CD4-positive, alpha-beta memory T cell (primary cell): ENCODE measurements at regions of chr7 and their contacts with region 1.

Region 1: GRCh38 chr7:157875230-157876179 is 538.7 kb downstream of the DNAJB6 start:
- DNase-seq: peak; percentile 53 to 66 (median 60)
- H3K4me3 ChIP-seq: peak overlapping the region; percentile 39 to 42
- H3K4me3 Mint-ChIP-seq: peak overlapping the region; percentile 58 to 90 (median 79)
- H3K27ac ChIP-seq: no peak overlapping the region
- H3K27ac Mint-ChIP-seq: peak overlapping the region; percentile 4 to 91 (median 53)
- H3K4me1 ChIP-seq: peaks cover 22% of the 10 kb centered on the region
- H3K4me1 Mint-ChIP-seq: peaks cover 13 to 24% (median 19%) of the 10 kb centered on the region in 4 donors
- H3K27me3 ChIP-seq: no peaks in the 10 kb centered on the region
- H3K27me3 Mint-ChIP-seq: peaks cover 0 to 2% of the 10 kb centered on the region in 2 donors

Region 2: DNA sequence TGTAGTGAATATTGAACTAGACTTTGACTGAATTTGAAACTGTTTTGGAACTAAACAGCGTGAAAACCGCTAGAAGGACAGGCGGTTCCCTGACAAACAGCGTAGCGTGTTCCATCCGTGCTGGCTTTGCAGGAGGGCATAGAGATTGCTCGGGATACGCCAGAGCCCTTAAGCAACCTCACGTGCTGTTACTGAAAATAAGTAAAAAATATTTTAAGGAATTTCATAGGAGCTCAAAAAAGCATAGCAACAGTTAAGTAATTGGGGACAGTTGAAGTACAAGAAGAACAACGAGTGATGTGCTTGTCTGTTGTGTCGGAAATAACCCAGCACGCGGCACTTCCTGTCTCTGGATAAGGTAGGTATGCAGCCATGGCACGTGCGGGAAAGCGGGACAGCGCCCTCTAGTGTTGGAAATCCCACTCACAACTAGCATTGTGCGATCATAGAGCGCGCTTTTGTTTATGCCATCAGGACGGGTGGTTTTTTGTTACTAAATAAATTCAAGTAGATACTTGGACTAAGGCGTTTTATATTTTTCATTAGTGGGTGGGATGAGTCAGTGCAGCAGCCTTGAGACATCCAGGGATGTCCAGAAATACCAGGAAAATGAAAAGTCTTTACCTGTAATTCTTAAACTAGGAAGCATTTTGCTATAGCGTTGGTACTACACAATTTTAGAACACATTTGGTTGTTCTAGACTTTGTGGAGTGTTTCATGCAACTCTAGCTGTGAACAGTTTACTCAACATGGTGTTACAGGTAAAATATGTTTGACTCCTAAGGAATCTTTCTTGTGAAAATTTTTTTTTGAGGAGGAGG is 488.3 kb before region 1 on chr7:
- CTCF ChIA-PET with region 1: no interaction called
- POLR2A ChIA-PET with region 1: no interaction called
- intact Hi-C with region 1: loop called (anchors 2 kb)
- DNase-seq: peak; percentile 83 to 94 (median 85)
- H3K4me3 ChIP-seq: no peak overlapping the region
- H3K4me3 Mint-ChIP-seq: peak overlapping the region in 7 of 8 donors; percentile 29 to 69 (median 37)
- H3K27ac ChIP-seq: peak overlapping the region; percentile 35
- H3K27ac Mint-ChIP-seq: peak overlapping the region; percentile 77 to 96 (median 86)
- H3K4me1 ChIP-seq: peaks cover 44% of the 10 kb centered on the region
- H3K4me1 Mint-ChIP-seq: peaks cover 31 to 51% (median 40%) of the 10 kb centered on the region in 4 donors
- H3K27me3 ChIP-seq: no peaks in the 10 kb centered on the region
- H3K27me3 Mint-ChIP-seq: no peaks in the 10 kb centered on the region

Region 3: DNA sequence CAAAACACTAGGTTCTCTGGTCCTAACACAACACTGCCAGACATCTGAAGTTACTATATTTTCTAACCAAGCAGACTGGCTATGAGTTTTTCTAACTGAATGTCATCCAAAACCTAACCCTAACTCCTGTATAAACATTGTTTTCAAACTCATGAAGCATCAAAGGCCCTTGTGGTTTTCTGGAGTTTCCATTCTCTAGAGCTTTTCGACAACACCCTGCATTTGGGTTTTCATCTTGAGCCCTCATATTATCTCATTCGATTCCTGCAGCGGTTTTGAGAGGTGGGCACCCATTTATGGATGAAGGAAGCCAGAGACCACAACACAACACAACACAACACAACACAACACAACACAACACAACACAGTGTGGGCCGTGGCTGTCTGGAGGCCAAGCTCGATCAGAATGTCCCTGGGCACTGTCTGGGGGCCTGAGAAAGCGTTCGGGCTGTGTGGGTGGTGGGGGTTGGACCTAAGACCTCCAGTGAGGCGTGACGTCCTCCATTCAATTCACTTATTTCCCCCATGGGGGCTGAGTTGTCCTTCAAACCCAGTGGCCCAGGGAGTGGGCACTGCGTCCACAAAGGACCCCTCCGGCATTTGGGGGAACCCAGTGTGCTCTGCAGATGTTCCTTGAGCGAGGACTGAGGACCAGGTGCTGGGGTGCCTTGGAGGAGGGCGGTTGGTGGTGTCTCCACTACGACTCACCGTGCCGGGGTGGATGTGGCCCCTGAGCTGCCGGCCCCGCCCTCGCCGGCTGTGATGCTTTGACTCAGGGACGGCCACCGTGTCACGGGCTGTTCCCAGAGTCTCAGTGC is 48.3 kb before region 1 on chr7:
- CTCF ChIA-PET with region 1: no interaction called
- POLR2A ChIA-PET with region 1: interaction called, 6 read pairs
- intact Hi-C with region 1: loop called (anchors 10 kb)
- DNase-seq: peak in 4 of 5 donors; percentile 20 to 38 (median 25)
- H3K4me3 ChIP-seq: no peak overlapping the region
- H3K4me3 Mint-ChIP-seq: peak overlapping the region; percentile 5 to 80 (median 62)
- H3K27ac ChIP-seq: no peak overlapping the region
- H3K27ac Mint-ChIP-seq: peak overlapping the region; percentile 24 to 86 (median 68)
- H3K4me1 ChIP-seq: peaks cover 33% of the 10 kb centered on the region
- H3K4me1 Mint-ChIP-seq: peaks cover 7 to 25% (median 15%) of the 10 kb centered on the region in 4 donors
- H3K27me3 ChIP-seq: no peaks in the 10 kb centered on the region
- H3K27me3 Mint-ChIP-seq: no peaks in the 10 kb centered on the region

Region 4: GRCh38 chr7:157851501-157852067 is 23.9 kb before region 1 on chr7:
- CTCF ChIA-PET with region 1: no interaction called
- POLR2A ChIA-PET with region 1: interaction called, 15 read pairs
- intact Hi-C with region 1: no loop called
- DNase-seq: peak; percentile 63 to 74 (median 71)
- H3K4me3 ChIP-seq: peak overlapping the region; percentile 27 to 42
- H3K4me3 Mint-ChIP-seq: peak overlapping the region; percentile 77 to 92 (median 82)
- H3K27ac ChIP-seq: peak overlapping the region; percentile 25
- H3K27ac Mint-ChIP-seq: peak overlapping the region; percentile 82 to 95 (median 93)
- H3K4me1 ChIP-seq: peaks cover 18% of the 10 kb centered on the region
- H3K4me1 Mint-ChIP-seq: peaks cover 5 to 16% (median 8%) of the 10 kb centered on the region in 4 donors
- H3K27me3 ChIP-seq: no peaks in the 10 kb centered on the region
- H3K27me3 Mint-ChIP-seq: no peaks in the 10 kb centered on the region

Region 5: GRCh38 chr7:158085741-158086695 is 210.5 kb after region 1 on chr7:
- CTCF ChIA-PET with region 1: no interaction called
- POLR2A ChIA-PET with region 1: no interaction called
- intact Hi-C with region 1: no loop called
- DNase-seq: no peak
- H3K4me3 ChIP-seq: no peak overlapping the region
- H3K4me3 Mint-ChIP-seq: no peak overlapping the region
- H3K27ac ChIP-seq: no peak overlapping the region
- H3K27ac Mint-ChIP-seq: no peak overlapping the region
- H3K4me1 ChIP-seq: no peaks in the 10 kb centered on the region
- H3K4me1 Mint-ChIP-seq: no peaks in the 10 kb centered on the region
- H3K27me3 ChIP-seq: no peaks in the 10 kb centered on the region
- H3K27me3 Mint-ChIP-seq: no peaks in the 10 kb centered on the region